ENCODE measurements at regions of chrX and their contacts with region 1.

Region 1: DNA sequence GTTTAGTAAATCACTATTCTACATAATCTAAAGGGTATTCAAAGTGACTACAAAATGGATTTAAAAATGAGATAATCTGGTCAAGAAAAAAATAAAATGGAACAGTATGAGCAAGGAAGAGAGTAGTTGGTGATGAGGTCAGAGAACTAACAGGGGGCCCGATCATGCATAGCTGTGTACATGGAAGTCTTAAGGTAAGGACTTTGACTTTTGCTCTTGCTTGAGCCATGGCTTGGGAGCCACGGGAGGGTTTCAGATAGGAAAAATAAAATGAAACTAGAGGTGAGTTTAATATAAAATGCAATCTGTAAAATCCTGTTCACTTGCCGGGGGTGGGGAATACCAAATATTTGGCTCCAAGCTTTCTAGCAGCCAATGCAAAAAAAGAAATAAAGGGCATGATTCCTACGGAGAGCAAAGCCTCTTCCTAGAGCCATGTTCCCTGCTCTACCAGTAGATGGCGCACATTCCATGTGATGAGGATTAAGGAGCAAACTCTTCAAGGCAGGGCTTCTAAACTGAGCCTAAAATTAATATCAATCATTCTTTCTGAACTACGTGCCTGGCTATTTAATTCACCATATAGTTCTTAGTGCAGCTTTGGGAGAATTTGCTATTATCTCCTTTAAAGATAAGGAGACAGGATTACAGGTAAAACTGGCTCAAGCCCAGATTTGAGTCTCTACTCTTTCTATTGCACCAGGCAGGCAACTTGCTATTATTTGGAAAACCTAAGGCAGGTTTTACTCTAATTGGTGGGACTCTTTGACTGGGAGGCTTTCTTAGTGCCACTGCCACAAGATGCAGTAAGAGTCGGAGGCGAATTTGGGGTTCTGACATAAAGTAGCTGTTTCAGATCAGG is 6.8 kb upstream of the CLCN5 start:
- DNase-seq: peak; percentile 72
- H3K4me3 Mint-ChIP-seq: no peak overlapping the region
- H3K27ac Mint-ChIP-seq: no peak overlapping the region
- H3K4me1 Mint-ChIP-seq: no peaks in the 10 kb centered on the region
- H3K27me3 Mint-ChIP-seq: peaks cover 5% of the 10 kb centered on the region
- CTCF ChIP-seq: peak; percentile 79

Region 2: DNA sequence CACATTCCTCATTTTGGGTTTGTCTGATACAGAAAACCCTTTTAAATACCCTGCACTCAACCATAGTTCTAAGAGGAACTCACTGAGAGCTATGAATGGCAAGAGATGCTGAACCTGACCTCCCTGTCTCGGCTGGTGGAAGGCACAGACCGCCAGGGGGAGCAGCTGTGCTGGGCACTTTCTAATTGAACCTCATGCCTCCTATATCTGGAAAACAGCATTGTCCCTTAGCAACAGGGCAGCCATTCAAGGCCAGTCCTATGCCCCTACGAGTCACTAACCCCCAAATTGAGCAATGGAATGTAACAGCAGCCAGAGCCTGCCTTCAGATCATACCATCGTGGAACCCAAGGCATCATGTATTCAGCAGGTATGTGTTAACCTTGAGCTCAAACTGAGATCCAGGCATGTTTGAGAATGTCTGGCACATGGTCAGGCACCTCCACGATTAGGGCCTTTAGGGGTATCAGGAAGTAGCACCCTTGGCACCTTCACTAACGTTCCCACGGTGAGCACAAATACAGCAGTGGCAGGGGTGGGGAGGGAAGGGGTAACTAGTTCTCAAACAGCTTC is 31.2 kb before region 1 on chrX:
- CTCF ChIA-PET with region 1: interaction called, 38 read pairs
- POLR2A ChIA-PET with region 1: no interaction called
- intact Hi-C with region 1: loop called (anchors 5 kb)
- DNase-seq: peak; percentile 62
- H3K4me3 Mint-ChIP-seq: no peak overlapping the region
- H3K27ac Mint-ChIP-seq: no peak overlapping the region
- H3K4me1 Mint-ChIP-seq: peaks cover 4% of the 10 kb centered on the region
- H3K27me3 Mint-ChIP-seq: peaks cover 26% of the 10 kb centered on the region
- CTCF ChIP-seq: peak; percentile 69

Region 3: GRCh38 chrX:50036426-50036825 is 120.8 kb after region 1 on chrX:
- CTCF ChIA-PET with region 1: no interaction called
- POLR2A ChIA-PET with region 1: no interaction called
- intact Hi-C with region 1: no loop called
- DNase-seq: no peak
- H3K4me3 Mint-ChIP-seq: no peak overlapping the region
- H3K27ac Mint-ChIP-seq: no peak overlapping the region
- H3K4me1 Mint-ChIP-seq: no peaks in the 10 kb centered on the region
- H3K27me3 Mint-ChIP-seq: peaks cover 15% of the 10 kb centered on the region
- CTCF ChIP-seq: no peak

Region 4: GRCh38 chrX:50081282-50081889 is 165.8 kb after region 1 on chrX:
- CTCF ChIA-PET with region 1: no interaction called
- POLR2A ChIA-PET with region 1: no interaction called
- intact Hi-C with region 1: loop called (anchors 1 kb)
- DNase-seq: peak; percentile 23
- H3K4me3 Mint-ChIP-seq: no peak overlapping the region
- H3K27ac Mint-ChIP-seq: no peak overlapping the region
- H3K4me1 Mint-ChIP-seq: no peaks in the 10 kb centered on the region
- H3K27me3 Mint-ChIP-seq: peaks cover 58% of the 10 kb centered on the region
- CTCF ChIP-seq: peak; percentile 8

Region 5: GRCh38 chrX:50204364-50204899 is 288.8 kb after region 1 on chrX and contains the start of gene CCNB3:
- CTCF ChIA-PET with region 1: interaction called, 7 read pairs
- POLR2A ChIA-PET with region 1: no interaction called
- intact Hi-C with region 1: loop called (anchors 1 kb)
- DNase-seq: peak; percentile 69
- H3K4me3 Mint-ChIP-seq: peak within 1 kb of the TSS; percentile 72
- H3K27ac Mint-ChIP-seq: peak within 1 kb of the TSS; percentile 68
- H3K4me1 Mint-ChIP-seq: peaks cover 6% of the 10 kb centered on the region
- H3K27me3 Mint-ChIP-seq: peaks cover 30% of the 10 kb centered on the region
- CTCF ChIP-seq: peak; percentile 60
- total RNA-seq, gene CCNB3: 0.17 and 0.68 TPM in 2 replicates

Region 6: DNA sequence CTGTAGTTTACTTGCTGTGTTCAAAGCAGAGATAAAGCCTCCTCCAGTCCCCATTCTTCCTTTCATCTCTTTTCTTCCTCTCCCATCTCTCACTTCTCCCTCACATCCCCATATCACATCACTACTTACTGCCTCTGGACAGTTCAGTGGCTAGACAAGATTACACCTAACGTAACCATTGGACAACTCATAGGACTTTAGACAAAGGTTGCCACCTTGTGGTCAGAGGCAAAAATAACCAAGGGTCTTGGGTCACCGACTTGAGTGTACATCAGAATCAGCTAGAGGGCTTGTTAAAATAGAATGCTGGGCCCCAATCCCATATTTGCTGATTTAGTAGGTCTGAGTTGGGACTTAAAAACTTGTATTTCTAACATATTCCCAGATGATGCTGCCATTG is 664.4 kb after region 1 on chrX:
- CTCF ChIA-PET with region 1: interaction called, 50 read pairs
- POLR2A ChIA-PET with region 1: no interaction called
- intact Hi-C with region 1: loop called (anchors 1 kb)
- DNase-seq: peak; percentile 79
- H3K4me3 Mint-ChIP-seq: no peak overlapping the region
- H3K27ac Mint-ChIP-seq: no peak overlapping the region
- H3K4me1 Mint-ChIP-seq: no peaks in the 10 kb centered on the region
- H3K27me3 Mint-ChIP-seq: peaks cover 68% of the 10 kb centered on the region
- CTCF ChIP-seq: peak; percentile 68

Region 7: DNA sequence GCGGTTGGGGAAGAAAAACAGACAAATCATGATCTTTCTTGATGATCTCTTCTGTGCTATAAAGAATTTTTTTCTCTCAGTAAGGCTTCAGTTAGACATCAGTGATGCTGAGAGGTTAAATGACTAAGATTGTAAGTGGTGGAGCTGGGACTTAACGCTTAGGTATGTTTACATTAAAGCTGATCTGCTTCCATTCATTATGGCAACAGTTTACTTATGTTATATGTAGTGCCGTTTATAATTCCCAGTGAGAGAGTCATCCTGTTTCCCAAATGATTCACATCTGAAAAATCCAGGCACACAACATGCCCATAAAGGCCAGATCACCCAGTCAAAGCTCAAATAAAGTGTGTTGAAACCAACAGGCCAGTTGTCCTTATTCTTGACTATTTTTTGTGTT is 1653.0 kb after region 1 on chrX:
- CTCF ChIA-PET with region 1: no interaction called
- POLR2A ChIA-PET with region 1: no interaction called
- intact Hi-C with region 1: no loop called
- DNase-seq: peak; percentile 25
- H3K4me3 Mint-ChIP-seq: no peak overlapping the region
- H3K27ac Mint-ChIP-seq: no peak overlapping the region
- H3K4me1 Mint-ChIP-seq: no peaks in the 10 kb centered on the region
- H3K27me3 Mint-ChIP-seq: peaks cover 34% of the 10 kb centered on the region
- CTCF ChIP-seq: no peak